Natural killer cell (primary cell): ENCODE measurements at regions of chr1 and their contacts with region 1.

Region 1: GRCh38 chr1:149962123-149962548 is 25.5 kb upstream of the MTMR11 start:
- DNase-seq: peak in 1 of 2 donors; percentile 80
- ATAC-seq: peak; percentile 79 to 93 (median 81)
- H3K4me3 ChIP-seq: no peak overlapping the region
- H3K4me3 Mint-ChIP-seq: no peak overlapping the region
- H3K27ac ChIP-seq: no peak overlapping the region
- H3K27ac Mint-ChIP-seq: peak overlapping the region in 1 of 2 donors; percentile 37
- H3K4me1 ChIP-seq: no peaks in the 10 kb centered on the region
- H3K4me1 Mint-ChIP-seq: peaks cover 0 to 9% of the 10 kb centered on the region in 2 donors
- H3K27me3 ChIP-seq: no peaks in the 10 kb centered on the region
- H3K27me3 Mint-ChIP-seq: no peaks in the 10 kb centered on the region
- CTCF ChIP-seq: peak; percentile 86

Region 2: DNA sequence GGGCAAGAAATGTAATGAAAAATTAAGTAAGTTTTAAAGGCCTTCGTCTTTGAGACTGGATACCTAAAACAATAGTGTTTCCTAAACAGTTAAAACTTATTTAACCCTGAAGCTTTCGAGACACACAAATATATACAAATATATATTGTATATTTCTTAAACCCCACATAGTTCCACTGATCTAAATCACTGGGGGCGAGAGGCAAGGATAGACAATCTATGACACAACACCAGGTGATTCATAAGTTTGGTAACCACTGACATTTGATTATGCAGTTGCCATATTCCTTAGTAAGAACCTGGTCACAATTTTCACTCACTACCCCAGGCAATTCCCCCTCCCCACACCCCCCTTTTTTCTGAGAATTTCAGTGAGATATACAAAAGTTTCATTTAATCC is 118.0 kb before region 1 on chr1:
- intact Hi-C with region 1: no loop called
- DNase-seq: peak in 1 of 2 donors; percentile 47
- ATAC-seq: no peak
- H3K4me3 ChIP-seq: peak overlapping the region; percentile 52
- H3K4me3 Mint-ChIP-seq: peak overlapping the region; percentile 91
- H3K27ac ChIP-seq: peak overlapping the region; percentile 63
- H3K27ac Mint-ChIP-seq: peak overlapping the region; percentile 85 to 92
- H3K4me1 ChIP-seq: peaks cover 7% of the 10 kb centered on the region
- H3K4me1 Mint-ChIP-seq: peaks cover 34 to 53% of the 10 kb centered on the region in 2 donors
- H3K27me3 ChIP-seq: no peaks in the 10 kb centered on the region
- H3K27me3 Mint-ChIP-seq: no peaks in the 10 kb centered on the region
- CTCF ChIP-seq: no peak

Region 3: DNA sequence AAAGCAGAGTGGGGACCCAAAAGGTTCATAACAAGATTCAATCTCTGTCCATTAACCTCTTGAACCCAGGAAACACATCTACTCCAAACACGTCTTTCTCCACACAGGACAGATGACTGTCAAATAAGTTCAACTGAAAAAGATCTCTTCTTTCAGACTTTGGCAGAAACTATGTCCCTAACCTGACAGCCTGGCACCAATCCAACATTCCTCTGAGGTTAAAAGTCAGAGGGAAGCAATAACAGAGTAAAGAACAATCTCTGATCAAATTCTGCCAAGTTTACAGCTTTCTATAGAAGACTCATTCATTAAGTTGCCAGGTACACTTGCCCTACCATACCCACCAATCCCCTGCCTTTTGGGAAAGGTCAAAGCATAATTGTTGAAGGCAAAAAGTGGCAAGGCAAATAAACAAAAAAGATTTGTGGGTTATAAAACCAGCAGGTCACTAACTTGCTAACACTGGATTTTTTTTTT is 16.4 kb after region 1 on chr1:
- intact Hi-C with region 1: no loop called
- DNase-seq: no peak
- ATAC-seq: no peak
- H3K4me3 ChIP-seq: no peak overlapping the region
- H3K4me3 Mint-ChIP-seq: no peak overlapping the region
- H3K27ac ChIP-seq: no peak overlapping the region
- H3K27ac Mint-ChIP-seq: no peak overlapping the region
- H3K4me1 ChIP-seq: no peaks in the 10 kb centered on the region
- H3K4me1 Mint-ChIP-seq: peaks cover 22 to 24% of the 10 kb centered on the region in 2 donors
- H3K27me3 ChIP-seq: no peaks in the 10 kb centered on the region
- H3K27me3 Mint-ChIP-seq: no peaks in the 10 kb centered on the region
- CTCF ChIP-seq: no peak

Region 4: GRCh38 chr1:150049926-150050325 is 87.8 kb after region 1 on chr1:
- intact Hi-C with region 1: loop called (anchors 1 kb)
- DNase-seq: no peak
- ATAC-seq: no peak
- H3K4me3 ChIP-seq: no peak overlapping the region
- H3K4me3 Mint-ChIP-seq: no peak overlapping the region
- H3K27ac ChIP-seq: no peak overlapping the region
- H3K27ac Mint-ChIP-seq: no peak overlapping the region
- H3K4me1 ChIP-seq: no peaks in the 10 kb centered on the region
- H3K4me1 Mint-ChIP-seq: no peaks in the 10 kb centered on the region
- H3K27me3 ChIP-seq: no peaks in the 10 kb centered on the region
- H3K27me3 Mint-ChIP-seq: peaks cover 12 to 14% of the 10 kb centered on the region in 2 donors
- CTCF ChIP-seq: no peak

Region 5: DNA sequence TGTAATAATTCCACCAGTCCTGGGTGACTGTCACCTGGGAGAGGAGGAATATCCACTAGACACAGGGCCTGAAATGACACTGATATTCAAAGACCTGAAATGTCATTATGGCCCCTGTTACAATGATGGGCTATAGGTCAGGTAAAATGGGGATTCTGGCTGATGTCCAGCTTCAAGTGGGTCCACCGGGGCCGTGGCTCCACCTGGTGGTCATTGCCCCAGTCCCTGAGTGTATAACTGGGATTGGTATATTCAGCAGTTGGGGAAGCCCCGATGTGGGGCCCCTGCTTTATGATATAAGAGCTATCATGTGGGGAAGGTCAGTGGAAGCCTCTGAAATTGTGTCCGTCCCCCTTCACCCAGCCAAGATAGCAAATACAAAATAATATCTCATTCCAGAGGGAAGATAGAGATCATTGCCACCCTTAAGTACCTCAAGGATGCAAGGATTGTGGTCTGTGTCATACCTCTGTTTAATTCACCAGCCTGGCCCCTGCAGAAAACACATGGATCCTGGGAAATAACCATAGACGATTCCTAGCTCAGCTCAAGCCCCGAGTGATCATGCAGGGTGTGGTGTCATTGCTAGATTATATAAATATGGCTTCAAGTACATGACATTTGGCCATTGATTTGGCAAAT is 206.9 kb after region 1 on chr1:
- intact Hi-C with region 1: loop called (anchors 1 kb)
- DNase-seq: peak; percentile 61 to 71
- ATAC-seq: peak; percentile 68 to 84 (median 77)
- H3K4me3 ChIP-seq: no peak overlapping the region
- H3K4me3 Mint-ChIP-seq: no peak overlapping the region
- H3K27ac ChIP-seq: no peak overlapping the region
- H3K27ac Mint-ChIP-seq: no peak overlapping the region
- H3K4me1 ChIP-seq: peaks cover 14% of the 10 kb centered on the region
- H3K4me1 Mint-ChIP-seq: no peaks in the 10 kb centered on the region
- H3K27me3 ChIP-seq: no peaks in the 10 kb centered on the region
- H3K27me3 Mint-ChIP-seq: peaks cover 0 to 2% of the 10 kb centered on the region in 2 donors
- CTCF ChIP-seq: peak; percentile 55

Region 6: DNA sequence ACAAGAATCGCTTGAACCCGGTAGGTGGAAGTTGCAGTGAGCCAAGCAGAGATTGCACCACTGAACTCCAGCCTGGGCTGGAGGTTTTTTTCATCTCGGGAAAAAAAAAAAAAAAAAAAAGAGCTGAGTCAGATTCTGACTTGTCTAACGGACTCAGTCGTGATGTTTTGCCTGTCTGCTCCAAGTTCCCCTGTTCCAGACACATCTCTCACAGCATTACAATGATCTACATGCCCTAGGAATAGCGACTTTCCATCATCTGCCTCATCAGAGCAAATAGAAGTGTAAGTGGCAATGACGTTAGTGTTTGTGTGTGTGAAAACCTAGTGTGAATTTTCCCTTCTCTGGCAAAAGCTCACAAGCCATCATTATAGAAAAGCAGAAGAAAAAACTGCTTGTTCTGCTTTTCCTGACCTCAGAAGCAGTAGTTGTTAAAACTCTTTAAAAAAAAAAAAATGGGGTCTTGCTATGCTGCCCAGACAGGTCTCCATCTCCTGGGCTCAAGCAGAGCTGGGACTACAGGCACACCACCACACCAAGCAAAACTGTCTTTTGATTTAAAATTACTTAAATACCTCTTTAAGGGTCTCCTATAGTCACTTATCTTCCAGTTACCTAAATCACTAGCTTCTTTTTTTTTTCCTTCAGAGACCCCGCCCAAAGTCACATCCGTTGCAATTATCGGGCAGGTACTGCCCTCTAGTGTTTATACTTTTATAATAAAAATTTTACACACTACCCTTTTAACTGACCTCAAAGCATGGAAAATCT is 224.8 kb after region 1 on chr1:
- intact Hi-C with region 1: loop called (anchors 1 kb)
- DNase-seq: peak; percentile 29 to 76
- ATAC-seq: peak; percentile 81 to 86 (median 82)
- H3K4me3 ChIP-seq: no peak overlapping the region
- H3K4me3 Mint-ChIP-seq: peak overlapping the region; percentile 69
- H3K27ac ChIP-seq: peak overlapping the region; percentile 50
- H3K27ac Mint-ChIP-seq: peak overlapping the region; percentile 85
- H3K4me1 ChIP-seq: peaks cover 17% of the 10 kb centered on the region
- H3K4me1 Mint-ChIP-seq: peaks cover 12 to 13% of the 10 kb centered on the region in 2 donors
- H3K27me3 ChIP-seq: no peaks in the 10 kb centered on the region
- H3K27me3 Mint-ChIP-seq: no peaks in the 10 kb centered on the region
- CTCF ChIP-seq: peak; percentile 63

Region 7: DNA sequence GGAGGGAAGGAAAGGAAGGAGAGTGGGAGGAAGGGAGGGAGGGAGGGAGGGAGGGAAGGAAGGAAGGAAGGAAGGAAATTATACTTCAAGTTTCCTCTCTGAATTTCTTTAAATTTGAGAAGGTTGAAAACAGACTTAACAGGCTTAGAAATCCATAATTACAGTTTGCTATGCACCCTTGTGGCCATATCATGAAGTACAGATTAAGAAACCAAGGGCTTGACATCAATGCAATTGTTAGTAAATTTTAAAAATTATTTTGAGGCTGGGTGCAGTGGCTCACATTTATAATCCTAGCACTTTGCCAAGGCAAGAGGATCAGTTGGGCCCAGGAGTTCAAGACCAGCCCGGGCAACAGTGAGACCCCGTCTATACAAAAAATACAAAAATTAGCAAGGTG is 259.4 kb after region 1 on chr1:
- intact Hi-C with region 1: loop called (anchors 1 kb)
- DNase-seq: peak in 1 of 2 donors; percentile 63
- ATAC-seq: peak; percentile 57 to 85 (median 70)
- H3K4me3 ChIP-seq: no peak overlapping the region
- H3K4me3 Mint-ChIP-seq: no peak overlapping the region
- H3K27ac ChIP-seq: no peak overlapping the region
- H3K27ac Mint-ChIP-seq: no peak overlapping the region
- H3K4me1 ChIP-seq: no peaks in the 10 kb centered on the region
- H3K4me1 Mint-ChIP-seq: peaks cover 5 to 6% of the 10 kb centered on the region in 2 donors
- H3K27me3 ChIP-seq: no peaks in the 10 kb centered on the region
- H3K27me3 Mint-ChIP-seq: no peaks in the 10 kb centered on the region
- CTCF ChIP-seq: peak; percentile 50